ENCODE measurements at regions of chr6 and their contacts with region 1.

Region 1: DNA sequence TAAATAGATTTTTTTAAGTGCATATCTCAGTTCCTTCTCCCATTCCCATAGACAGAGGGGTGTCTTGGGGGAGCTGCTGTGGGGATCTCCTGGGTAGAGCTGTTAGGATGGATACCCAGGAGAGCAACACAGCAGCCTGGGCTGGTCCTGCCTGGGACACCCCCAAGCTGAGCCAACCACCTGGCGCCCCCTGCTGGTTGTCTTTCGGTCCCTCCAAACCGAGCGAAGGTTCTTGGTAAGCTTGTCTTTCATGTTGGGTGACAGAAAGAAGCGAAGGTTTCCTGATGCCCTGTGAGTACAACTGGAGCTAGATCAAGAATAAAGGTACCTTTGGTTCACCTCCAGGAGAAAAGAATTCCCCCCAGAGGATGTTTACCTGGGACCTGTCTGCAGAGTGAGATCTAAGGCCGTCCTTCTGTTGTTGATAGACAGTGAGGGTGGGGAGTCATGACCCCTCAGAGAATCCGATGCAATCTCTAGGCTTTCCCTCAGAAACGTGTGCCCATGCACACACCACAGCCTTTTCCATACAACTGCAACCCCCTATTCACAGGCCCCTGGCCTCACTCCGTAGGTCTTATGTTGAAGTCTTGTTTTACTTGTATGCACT is 50.8 kb downstream of the SNX9 start:
- DNase-seq: peak; percentile 94
- ATAC-seq: peak; percentile 87
- H3K4me3 Mint-ChIP-seq: no peak overlapping the region
- H3K27ac Mint-ChIP-seq: no peak overlapping the region
- H3K4me1 Mint-ChIP-seq: peaks cover 38% of the 10 kb centered on the region
- H3K27me3 Mint-ChIP-seq: no peaks in the 10 kb centered on the region

Region 2: GRCh38 chr6:157644043-157644810 is 229.6 kb before region 1 on chr6:
- CTCF ChIA-PET with region 1: no interaction called
- POLR2A ChIA-PET with region 1: no interaction called
- intact Hi-C with region 1: loop called in 1 of 2 experiments (anchors 1 kb)
- DNase-seq: peak; percentile 64
- ATAC-seq: peak; percentile 82
- H3K4me3 Mint-ChIP-seq: no peak overlapping the region
- H3K27ac Mint-ChIP-seq: no peak overlapping the region
- H3K4me1 Mint-ChIP-seq: peaks cover 14% of the 10 kb centered on the region
- H3K27me3 Mint-ChIP-seq: no peaks in the 10 kb centered on the region

Region 3: DNA sequence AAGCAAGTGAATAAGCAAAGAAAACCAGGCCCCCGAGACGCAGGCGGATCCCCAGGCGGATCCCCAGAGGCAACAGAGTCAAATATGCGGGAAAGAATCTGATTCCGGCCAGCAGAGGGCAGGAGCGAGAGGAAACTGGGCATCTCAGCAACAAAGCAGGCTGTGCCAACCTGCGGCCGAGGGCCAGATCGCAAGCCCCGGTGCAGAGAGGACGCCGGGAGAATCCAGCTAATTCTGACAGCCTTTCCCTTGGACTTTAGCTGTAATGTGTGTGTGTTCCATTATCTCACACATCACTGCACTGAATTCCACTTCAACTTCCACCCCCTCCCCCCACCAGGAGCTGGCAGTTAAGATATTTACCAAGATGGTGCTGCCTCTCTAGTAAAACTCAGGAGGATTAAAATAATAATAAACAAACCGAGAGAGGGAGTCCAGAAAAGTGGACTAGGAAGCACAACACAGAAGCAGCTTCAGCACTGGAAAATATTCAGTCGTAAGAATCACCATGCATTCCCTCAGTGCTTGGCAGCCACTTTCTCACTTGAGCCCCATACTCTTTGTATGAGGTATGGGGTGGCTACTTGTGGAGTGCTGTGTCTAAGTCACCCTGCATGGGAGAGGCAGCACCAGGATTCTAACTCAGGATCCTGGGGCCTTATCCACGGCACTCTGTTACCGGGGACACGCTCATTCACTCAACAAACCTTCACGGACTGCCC is 117.0 kb before region 1 on chr6:
- CTCF ChIA-PET with region 1: interaction called, 46 read pairs
- POLR2A ChIA-PET with region 1: interaction called, 3 read pairs
- intact Hi-C with region 1: loop called (anchors 1 kb)
- DNase-seq: peak; percentile 91
- ATAC-seq: peak; percentile 23
- H3K4me3 Mint-ChIP-seq: peak overlapping the region; percentile 48
- H3K27ac Mint-ChIP-seq: peak overlapping the region; percentile 87
- H3K4me1 Mint-ChIP-seq: peaks cover 94% of the 10 kb centered on the region
- H3K27me3 Mint-ChIP-seq: peaks cover 5% of the 10 kb centered on the region

Region 4: GRCh38 chr6:157800420-157801237 is 73.2 kb before region 1 on chr6:
- CTCF ChIA-PET with region 1: interaction called, 13 read pairs
- POLR2A ChIA-PET with region 1: no interaction called
- intact Hi-C with region 1: no loop called
- DNase-seq: peak; percentile 70
- ATAC-seq: peak; percentile 89
- H3K4me3 Mint-ChIP-seq: peak overlapping the region; percentile 41
- H3K27ac Mint-ChIP-seq: peak overlapping the region; percentile 72
- H3K4me1 Mint-ChIP-seq: peaks cover 62% of the 10 kb centered on the region
- H3K27me3 Mint-ChIP-seq: peaks cover 5% of the 10 kb centered on the region

Region 5: GRCh38 chr6:157830354-157831017 is 43.4 kb before region 1 on chr6:
- CTCF ChIA-PET with region 1: interaction called, 14 read pairs
- POLR2A ChIA-PET with region 1: interaction called, 3 read pairs
- intact Hi-C with region 1: loop called (anchors 2 to 5 kb)
- DNase-seq: no peak
- ATAC-seq: peak; percentile 48
- H3K4me3 Mint-ChIP-seq: peak overlapping the region; percentile 37
- H3K27ac Mint-ChIP-seq: peak overlapping the region; percentile 75
- H3K4me1 Mint-ChIP-seq: peaks cover 76% of the 10 kb centered on the region
- H3K27me3 Mint-ChIP-seq: no peaks in the 10 kb centered on the region

Region 6: DNA sequence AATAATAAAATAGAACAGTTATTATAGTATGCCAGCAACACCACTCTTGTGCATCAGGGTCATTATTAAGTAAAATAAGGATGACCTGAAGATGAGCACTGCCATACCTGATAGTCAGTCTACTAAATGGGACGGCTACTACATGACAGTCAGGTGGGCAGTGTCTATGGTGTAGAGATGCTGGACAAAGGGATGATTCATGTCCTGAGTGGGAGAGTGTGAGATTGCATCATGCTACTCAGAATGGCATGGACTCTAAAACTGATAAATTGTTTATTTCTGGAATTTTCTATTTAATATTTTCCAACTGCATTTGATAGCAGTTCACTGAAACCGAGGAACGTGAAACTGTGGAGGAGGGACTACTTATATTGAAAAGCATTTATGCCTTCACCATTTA is 12.0 kb before region 1 on chr6:
- CTCF ChIA-PET with region 1: interaction called, 14 read pairs
- POLR2A ChIA-PET with region 1: no interaction called
- intact Hi-C with region 1: no loop called
- DNase-seq: no peak
- ATAC-seq: no peak
- H3K4me3 Mint-ChIP-seq: no peak overlapping the region
- H3K27ac Mint-ChIP-seq: no peak overlapping the region
- H3K4me1 Mint-ChIP-seq: peaks cover 74% of the 10 kb centered on the region
- H3K27me3 Mint-ChIP-seq: no peaks in the 10 kb centered on the region

Region 7: DNA sequence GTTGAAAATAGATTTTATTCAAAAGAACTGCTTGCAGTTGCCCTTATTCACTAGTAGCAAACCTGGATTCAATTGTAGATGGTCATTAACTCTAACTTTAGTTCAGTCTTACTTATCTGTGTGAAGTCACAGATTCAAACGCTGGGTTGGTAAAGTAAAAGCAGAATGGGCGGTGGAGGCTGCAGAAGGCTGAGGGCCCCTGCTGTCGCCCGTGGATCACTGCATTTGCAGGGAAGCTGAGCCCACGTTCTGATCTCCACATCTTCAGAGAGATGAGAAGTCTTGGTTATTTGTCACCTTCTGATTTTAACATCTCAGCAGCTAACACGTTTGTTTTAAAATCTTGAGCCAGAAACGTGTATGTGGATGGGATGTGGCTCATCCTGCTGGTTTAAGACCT is 24.3 kb after region 1 on chr6:
- CTCF ChIA-PET with region 1: interaction called, 10 read pairs
- POLR2A ChIA-PET with region 1: no interaction called
- intact Hi-C with region 1: no loop called
- DNase-seq: peak; percentile 59
- ATAC-seq: peak; percentile 82
- H3K4me3 Mint-ChIP-seq: no peak overlapping the region
- H3K27ac Mint-ChIP-seq: no peak overlapping the region
- H3K4me1 Mint-ChIP-seq: peaks cover 14% of the 10 kb centered on the region
- H3K27me3 Mint-ChIP-seq: no peaks in the 10 kb centered on the region